Cardiac septum (tissue), 1 donor: ENCODE measurements at regions of chr18 and their contacts with region 1.

Region 1: DNA sequence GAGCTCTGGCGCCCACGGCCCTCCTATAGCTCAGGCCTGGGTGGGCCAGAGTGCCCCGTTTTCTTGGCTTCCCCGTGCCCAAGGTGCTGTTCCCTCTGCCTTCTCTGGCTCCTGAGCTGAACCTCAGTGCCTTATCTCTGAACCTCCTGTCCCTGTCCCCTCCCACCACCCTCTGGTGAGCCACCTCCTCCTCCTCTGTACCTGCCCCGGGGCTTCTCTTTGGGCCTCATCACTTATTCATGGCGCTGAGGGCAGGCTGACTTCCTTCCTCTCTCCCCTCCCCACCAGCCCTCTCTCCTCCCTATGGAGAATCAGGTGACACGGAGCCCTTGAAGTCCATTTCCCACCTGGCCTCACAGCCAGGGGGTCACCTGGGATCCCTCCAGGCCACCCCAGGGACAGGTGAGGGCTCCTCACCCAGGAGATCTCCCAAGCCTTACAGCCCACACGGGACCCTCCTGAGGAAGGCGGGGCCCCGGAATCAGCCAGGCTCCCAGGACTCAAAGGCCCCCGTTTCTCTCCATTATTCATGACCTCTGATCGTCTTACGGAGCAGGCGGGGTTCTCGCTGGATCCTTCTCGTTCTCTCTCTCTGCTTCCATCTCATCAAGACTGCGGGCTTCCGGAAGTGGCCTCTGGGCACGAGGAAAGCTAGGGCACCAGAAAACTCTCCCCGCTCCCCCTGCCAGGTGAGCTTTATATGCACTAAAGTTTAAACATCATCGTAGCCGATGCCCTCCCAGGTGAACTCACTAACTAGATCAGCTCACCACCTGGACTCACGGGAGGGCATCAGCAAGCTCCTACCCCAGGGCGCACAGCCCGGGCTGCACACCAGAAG is at the start of gene LOXHD1:
- DNase-seq: peak; percentile 59
- total RNA-seq, gene LOXHD1: 0.48 TPM

Region 2: DNA sequence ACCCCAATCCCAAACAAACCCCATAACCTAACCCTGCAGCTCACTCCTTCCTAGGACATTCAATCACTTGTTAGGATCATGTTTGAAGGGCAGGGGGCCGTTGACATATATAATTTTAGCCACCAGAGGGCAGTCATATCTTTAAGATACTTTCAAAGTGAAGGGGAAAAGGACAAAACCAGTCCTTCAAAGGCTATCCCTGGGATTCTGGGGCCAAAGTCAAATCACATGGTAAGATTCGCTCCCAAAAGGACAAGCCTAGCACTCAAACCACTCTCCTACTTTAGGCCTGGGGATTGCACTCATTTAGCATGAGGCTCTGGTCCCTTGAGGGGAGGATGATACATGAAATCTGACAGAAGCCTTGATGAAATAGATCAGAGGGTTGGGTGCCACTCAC is 508.5 kb before region 1 on chr18:
- intact Hi-C with region 1: loop called (anchors 2 kb)
- DNase-seq: peak; percentile 35

Region 3: DNA sequence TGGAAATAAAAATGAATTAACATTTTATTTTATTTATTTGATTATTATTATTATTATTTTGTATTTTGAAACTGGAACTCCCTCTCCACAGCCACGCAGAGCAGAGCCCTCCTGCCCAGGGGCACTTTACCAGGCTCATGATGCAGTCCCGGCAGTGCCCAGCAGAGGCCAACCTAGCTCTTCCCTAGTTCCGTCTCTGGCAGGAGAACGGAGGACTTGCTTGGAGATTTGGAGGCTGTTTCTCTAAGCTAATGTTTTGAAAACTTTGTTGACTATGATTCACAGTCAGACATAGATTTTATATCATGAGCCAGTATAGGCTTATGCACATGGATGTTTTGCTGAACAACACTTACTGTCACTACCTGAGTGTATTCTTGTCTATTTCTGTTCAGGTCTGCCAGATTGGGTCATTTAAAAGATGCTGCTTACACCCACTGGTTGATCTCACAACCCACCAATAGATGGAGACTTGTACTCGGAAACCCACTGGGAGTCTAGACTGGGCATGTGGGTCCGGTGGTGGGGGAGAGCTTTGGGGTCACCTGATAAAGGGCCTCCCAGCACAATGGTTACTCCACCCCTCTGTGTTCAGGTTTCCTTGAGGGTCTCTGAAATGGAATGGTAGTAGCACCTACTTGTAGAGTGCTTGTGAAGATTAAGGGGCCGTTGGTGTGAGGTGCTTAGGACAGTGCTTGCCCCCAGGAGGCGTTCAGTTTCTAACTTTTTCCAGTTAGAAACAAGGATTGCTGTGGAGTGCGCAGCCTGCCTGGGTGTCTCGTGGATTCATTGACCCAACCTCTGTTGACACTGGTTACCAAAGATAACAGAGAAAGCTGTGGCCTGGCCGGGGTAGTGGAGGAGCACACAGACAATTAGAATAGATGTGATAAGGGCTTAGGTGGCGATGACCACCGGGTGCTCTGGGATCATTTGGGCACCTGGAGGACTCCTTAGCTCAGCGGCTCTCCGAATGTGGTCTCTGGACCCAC is 375.9 kb before region 1 on chr18:
- intact Hi-C with region 1: loop called (anchors 5 kb)
- DNase-seq: no peak

Region 4: DNA sequence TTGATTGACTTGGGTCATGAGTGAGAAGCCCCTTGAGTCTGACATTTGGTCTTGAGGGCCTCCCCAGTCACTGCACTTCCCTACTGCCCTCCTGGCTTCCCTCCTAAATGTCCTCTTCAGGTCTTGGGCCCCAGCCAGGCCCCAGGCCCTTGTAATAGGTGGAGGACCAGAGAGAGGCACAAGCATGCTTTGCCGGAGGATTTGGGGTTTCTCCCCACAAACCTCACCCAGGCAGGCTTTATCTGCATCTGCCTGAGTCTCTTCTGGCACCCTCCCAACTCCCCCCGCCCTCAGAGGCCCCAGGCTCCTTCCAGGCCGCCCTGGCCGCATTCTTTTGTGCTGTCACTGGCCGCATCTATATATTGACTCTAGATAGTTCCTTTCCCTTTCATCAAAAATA is 282.5 kb before region 1 on chr18:
- intact Hi-C with region 1: no loop called
- DNase-seq: no peak

Region 5: GRCh38 chr18:46555724-46556123 is 101.6 kb before region 1 on chr18:
- intact Hi-C with region 1: loop called (anchors 5 kb)
- DNase-seq: no peak